Right cardiac atrium (tissue), 5 donors: ENCODE measurements at regions of chr22 and their contacts with region 1.

Region 1: GRCh38 chr22:38777087-38777671 is 16.8 kb downstream of the DNAL4 start:
- DNase-seq: peak in 1 of 3 donors; percentile 79
- ATAC-seq: peak; percentile 38 to 44
- H3K4me3 ChIP-seq: no peak overlapping the region
- H3K27ac ChIP-seq: no peak overlapping the region
- H3K4me1 ChIP-seq: peaks cover 5% of the 10 kb centered on the region
- H3K27me3 ChIP-seq: no peaks in the 10 kb centered on the region

Region 2: DNA sequence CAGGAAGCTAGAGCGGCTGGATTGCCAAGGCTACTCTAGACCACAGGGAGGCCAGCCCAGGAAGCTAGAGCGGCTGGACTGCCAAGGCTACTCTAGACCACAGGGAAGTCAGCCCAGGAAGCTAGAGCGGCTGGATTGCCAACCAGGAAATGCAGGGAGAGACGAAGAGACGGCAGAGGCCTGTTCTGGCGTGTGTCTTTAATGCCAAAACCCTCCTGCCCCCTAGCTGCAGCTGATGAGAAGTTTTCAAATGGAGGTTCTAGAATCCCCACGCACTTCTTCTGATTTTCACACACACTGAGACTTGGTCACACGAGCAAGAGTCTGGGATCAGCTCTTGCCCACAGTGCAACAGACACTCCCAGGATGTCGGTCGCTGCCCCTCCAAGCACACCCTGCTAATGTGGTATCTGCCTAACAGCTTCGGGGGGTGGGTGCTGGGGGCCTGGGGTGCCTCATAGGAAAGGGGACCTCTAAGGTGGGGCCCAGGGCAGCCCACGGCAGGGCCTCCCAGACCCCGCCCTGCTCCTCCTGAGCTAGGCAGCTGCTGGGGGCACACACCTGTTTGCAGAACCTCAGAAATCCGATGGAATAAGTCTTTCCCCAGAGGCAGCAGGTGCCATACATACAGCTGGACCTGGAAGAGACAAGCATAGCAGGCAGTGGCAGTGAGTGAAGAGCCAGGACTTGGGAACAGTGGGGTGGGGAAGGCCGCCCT is 546.9 kb before region 1 on chr22:
- intact Hi-C with region 1: no loop called
- DNase-seq: peak in 1 of 3 donors; percentile 87
- ATAC-seq: peak in 1 of 2 donors; percentile 28
- H3K4me3 ChIP-seq: no peak overlapping the region
- H3K27ac ChIP-seq: no peak overlapping the region
- H3K4me1 ChIP-seq: peaks cover 3% of the 10 kb centered on the region
- H3K27me3 ChIP-seq: no peaks in the 10 kb centered on the region

Region 3: DNA sequence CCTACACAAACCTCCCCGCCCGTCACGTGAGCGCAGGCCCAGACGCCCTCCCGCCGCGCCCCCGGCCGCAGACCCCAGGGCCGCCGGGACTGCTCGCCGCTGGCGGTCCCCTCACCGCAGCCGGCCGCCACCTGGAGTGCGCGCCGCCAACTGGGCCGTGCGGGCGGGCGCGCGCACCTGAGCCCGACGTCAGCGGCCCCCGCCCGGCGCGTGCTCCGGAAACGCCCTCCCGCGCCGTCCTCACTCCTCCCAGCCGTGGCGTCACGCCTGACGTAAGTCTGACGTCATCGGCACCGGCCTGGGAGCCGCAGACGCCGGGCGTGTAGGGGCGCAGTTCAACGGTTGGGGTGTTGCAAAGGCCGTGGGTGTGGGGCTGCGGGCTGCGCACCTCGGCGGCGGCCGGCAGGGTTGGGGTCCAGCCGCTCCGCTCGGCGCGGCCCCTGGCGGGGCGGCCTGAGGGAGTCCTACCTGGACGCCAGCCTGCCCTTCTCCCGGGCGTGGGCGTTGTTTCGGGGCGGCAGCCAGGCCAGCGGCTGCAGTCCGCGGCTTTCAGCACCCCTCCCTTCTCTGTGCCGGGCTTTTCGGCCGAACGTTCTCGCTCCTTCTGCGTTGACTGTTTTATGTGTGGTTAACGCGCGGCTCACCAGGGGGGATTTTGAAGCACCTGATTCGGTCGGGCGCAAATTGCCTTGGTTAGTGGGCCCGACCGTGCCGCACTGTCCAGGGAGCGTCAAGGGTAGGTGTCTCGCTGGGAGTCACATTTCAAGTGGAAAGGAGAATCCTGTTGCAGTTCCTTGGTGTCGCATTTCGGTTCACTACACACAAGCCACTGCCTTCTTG is 76.2 kb before region 1 on chr22 and contains the start of gene JOSD1:
- intact Hi-C with region 1: no loop called
- DNase-seq: peak; percentile 97 to 99 (median 98)
- ATAC-seq: peak; percentile 63 to 66
- H3K4me3 ChIP-seq: peak within 1 kb of the TSS; percentile 71
- H3K27ac ChIP-seq: peak within 1 kb of the TSS; percentile 94
- H3K4me1 ChIP-seq: peaks cover 6% of the 10 kb centered on the region
- H3K27me3 ChIP-seq: no peaks in the 10 kb centered on the region
- total RNA-seq, gene JOSD1: 21.4 to 28.6 (median 22.5) TPM

Region 4: GRCh38 chr22:38843201-38843715 is 66.1 kb after region 1 on chr22:
- intact Hi-C with region 1: loop called in 2 of 4 experiments (anchors 5 to 10 kb)
- DNase-seq: peak; percentile 57 to 83 (median 77)
- ATAC-seq: peak; percentile 66 to 80
- H3K4me3 ChIP-seq: peak overlapping the region; percentile 83
- H3K27ac ChIP-seq: no peak overlapping the region
- H3K4me1 ChIP-seq: no peaks in the 10 kb centered on the region
- H3K27me3 ChIP-seq: no peaks in the 10 kb centered on the region